ENCODE measurements at regions of chr21 and their contacts with region 1.

Region 1: DNA sequence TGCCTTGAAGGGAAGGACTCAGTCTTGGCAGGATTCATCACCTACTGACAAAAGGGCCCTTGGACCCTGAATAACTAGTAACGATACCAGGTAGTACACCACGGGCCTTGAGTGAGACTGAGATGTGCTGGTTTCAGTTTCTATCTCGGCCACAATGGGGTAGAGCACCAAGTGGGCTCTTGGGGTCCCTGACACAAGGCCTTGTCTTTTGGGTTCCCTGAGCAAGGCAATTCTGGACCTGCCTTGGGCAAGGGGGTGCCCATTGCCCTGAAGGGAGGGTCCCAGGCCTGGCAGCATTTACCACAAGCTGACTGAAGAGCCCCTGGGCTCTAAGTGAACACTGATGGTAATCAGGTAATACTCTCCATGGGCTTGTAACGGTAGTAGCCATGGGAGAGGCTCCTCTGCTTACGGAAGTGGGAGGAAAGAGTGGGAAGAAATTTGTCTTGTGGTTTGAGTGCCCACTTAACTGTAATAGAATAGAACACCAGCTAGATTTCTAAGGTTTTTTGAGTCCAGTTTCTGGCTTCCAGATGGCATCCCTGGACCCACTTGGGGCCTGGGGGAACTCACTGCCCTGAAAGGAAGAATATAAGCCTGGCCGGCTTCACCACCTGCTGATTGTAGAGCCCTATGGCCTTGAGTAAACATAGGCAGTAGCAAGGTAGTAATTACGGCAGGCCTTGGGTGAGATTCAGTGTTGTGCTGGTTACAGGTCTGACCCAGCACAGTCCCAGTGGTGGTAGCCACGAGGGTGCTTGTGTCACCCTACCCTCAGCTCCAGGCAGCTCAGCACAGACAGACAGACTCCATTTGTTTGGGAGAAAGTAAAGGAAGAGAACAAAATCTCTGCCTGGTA is 58.5 kb downstream of the WDR4 start:
- DNase-seq: no peak
- ATAC-seq: peak in 2 of 4 donors; percentile 47 to 64
- H3K4me3 ChIP-seq: no peak overlapping the region
- H3K27ac ChIP-seq: no peak overlapping the region
- H3K4me1 ChIP-seq: no peaks in the 10 kb centered on the region
- H3K27me3 ChIP-seq: no peaks in the 10 kb centered on the region
- CTCF ChIP-seq: no peak

Region 2: GRCh38 chr21:42164064-42164789 is 656.6 kb before region 1 on chr21:
- intact Hi-C with region 1: no loop called
- DNase-seq: peak in 5 of 6 donors; percentile 23 to 66 (median 53)
- ATAC-seq: peak; percentile 66 to 96 (median 88)
- H3K4me3 ChIP-seq: no peak overlapping the region
- H3K27ac ChIP-seq: no peak overlapping the region
- H3K4me1 ChIP-seq: no peaks in the 10 kb centered on the region
- H3K27me3 ChIP-seq: no peaks in the 10 kb centered on the region
- CTCF ChIP-seq: peak in 3 of 4 donors; percentile 9 to 20 (median 9)

Region 3: DNA sequence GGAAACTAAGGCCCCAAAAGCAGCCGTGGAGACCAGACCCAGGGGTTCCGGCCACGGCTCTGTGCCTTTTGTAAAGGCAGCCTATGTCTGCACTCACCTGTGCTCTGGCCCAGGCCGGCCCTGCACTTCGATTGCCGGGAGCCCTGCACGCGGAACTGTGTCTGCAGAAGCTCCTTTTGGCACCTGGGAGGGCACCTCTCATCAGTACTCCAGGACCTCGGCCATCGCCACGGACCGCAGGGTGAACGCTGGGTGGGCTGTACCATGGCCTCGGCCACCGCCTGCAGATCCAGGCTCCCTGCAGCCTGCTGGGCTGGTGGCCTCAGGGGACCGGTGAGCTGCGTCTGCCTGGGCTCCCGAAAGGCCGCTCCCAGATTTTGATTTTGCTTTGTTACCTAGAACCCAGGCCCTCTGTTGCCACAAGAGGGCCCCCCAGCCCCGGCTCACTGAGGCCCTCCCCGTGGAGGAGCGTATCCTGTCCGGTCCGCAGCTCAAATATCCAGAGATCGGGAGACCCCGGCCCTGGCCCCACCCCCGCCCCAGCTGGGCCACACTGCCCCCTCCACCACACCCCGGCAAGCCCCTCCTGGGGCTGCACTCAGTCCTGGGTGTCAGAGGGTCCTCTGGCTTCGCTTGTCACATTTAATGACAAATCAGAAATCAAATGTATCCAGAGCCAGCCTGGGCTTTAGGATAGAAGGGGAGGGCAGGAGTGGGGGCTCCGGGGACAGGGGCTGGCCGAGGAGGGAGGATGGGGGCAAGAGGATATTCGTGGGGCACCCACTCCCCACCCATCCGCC is 227.6 kb before region 1 on chr21:
- intact Hi-C with region 1: loop called in 1 of 3 experiments (anchors 10 kb)
- DNase-seq: peak; percentile 42 to 87 (median 68)
- ATAC-seq: peak; percentile 86 to 99 (median 98)
- H3K4me3 ChIP-seq: peak overlapping the region in 1 of 4 donors; percentile 7
- H3K27ac ChIP-seq: no peak overlapping the region
- H3K4me1 ChIP-seq: peaks cover 0 to 3% (median 0%) of the 10 kb centered on the region in 3 donors
- H3K27me3 ChIP-seq: no peaks in the 10 kb centered on the region
- CTCF ChIP-seq: peak in 3 of 4 donors; percentile 65 to 73 (median 68)

Region 4: DNA sequence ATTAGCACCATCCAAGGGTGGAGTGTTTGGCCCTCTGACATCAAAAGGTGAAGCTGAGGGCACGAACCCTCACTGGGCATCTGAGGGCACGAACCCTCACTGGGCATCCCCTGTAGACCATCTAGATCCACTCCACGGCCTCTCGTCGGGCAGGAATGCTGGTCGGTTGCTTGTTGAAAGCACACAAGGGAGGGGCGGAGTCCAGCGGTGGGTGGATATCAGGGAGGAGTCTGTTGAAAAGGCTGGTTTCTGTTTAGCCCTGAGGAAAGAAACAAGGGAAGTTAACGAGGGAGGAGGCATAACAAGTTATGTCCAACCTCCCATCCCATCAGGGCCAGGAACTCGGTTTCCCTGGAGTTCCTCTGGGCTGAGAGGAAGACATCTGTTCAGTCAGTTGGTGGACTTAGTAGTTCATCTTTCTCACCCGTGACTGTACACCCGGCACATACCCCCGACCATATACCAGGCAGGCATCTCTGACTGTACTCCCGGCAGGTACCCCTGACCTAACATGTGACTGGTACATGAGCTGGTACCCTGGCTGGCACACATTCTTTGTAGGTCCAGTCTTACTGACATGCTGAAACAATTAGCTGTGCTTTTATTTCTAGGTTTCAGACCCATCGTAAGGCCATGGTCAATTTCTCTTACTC is 199.6 kb before region 1 on chr21:
- intact Hi-C with region 1: no loop called
- DNase-seq: no peak
- ATAC-seq: no peak
- H3K4me3 ChIP-seq: no peak overlapping the region
- H3K27ac ChIP-seq: no peak overlapping the region
- H3K4me1 ChIP-seq: peaks cover 0 to 11% (median 7%) of the 10 kb centered on the region in 3 donors
- H3K27me3 ChIP-seq: peaks cover 0 to 8% (median 1%) of the 10 kb centered on the region in 4 donors
- CTCF ChIP-seq: no peak